Activated CD4-positive, alpha-beta memory T cell treated with anti-CD3 and anti-CD28 coated beads, Interleukin-2, amount 10 ng/mL, durations not matched to agents 7 days and 5 days (primary cell): ENCODE measurements at regions of chr10 and their contacts with region 1.

Region 1: DNA sequence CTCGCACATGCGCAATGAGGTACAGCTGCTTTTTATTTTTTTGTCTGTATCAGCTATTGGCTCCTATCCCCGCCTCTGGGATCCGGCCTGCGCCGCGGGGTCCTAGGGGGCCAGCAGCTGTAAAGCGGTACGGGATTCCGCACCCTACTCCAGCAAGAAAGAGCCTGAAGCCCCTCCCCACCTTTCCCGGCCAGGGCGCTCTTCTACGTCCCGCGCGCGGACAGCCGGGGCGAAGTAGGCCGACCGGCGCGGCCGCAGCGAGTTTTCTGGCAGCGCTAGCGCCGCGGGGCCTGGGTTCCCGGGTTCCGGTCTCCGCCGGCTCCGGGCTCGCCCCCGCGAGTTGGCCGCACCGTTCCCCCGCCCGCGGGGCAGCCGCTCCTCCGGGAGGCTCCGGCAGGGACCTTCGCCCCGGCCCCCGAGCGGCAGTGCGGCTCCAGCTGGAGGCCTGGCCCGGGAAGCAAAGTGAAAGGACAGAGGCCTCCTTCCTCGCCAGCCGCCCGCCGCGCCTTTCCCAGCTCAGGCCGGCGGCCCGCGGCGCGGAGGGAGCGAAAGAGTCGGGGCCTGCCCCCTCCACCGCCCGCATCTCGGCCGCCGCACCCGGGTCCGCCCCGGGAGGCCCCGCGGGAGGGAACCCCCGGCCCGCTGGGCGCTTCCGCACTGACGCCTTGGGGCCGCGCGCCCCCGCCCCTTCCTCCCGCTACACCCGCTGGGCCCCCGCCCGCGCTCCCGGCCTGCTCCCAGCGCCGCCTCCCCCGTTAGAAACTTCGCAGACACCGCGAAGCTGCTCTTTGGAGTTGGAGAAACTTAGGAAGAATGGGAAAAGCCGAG is 4.7 kb upstream of the SPAG6 start:
- DNase-seq: peak; percentile 72
- H3K4me3 Mint-ChIP-seq: peak overlapping the region; percentile 85
- H3K27ac Mint-ChIP-seq: peak overlapping the region; percentile 95
- H3K4me1 Mint-ChIP-seq: peaks cover 56% of the 10 kb centered on the region
- H3K27me3 Mint-ChIP-seq: peaks cover 69% of the 10 kb centered on the region

Region 2: DNA sequence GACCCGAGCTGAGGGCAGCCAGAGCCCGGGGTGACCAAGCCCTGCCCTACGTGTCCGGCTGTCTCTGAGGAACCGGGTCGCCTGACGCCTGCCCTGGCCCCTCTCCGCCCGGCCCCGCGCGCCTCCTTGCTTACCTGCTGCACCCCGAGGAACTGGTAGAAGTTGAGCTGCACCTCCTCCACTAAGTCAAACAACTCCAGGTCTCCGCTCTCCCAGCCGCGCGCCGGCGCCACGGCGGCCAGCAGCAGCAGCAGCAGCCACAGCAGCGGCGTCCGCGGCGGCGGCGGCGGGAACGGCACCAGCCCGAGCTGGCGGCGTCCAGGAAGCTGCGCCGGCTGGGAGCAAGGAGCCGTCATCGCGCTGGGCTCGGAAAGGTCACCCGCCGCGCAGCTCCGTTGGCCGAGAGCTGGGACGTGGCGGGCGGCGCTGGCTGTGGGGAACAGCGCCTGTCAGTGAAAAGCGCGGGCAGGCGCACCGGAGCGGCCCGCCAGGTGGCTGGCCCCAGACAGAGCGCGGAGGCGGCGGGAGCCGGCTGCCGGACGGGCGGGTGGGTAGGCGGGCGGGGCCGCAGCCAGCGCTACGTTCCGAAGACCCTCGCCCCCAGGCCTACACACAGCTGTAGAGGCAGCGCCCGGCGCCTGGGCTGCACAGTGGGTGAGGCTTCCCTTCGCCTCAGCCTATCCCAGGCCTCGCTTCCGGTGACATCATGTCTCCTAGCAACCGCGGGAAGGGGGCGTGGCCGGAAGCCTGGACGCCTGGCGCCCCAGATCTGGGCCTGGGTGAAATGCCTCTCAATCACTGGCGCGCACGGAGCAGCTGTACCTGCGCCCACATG is 337.3 kb before region 1 on chr10 and contains the start of gene DNAJC1:
- CTCF ChIA-PET with region 1: interaction called, 6 read pairs
- POLR2A ChIA-PET with region 1: interaction called, 24 read pairs
- DNase-seq: peak; percentile 98
- H3K4me3 Mint-ChIP-seq: peak within 1 kb of the TSS; percentile 96
- H3K27ac Mint-ChIP-seq: peak within 1 kb of the TSS; percentile 93
- H3K4me1 Mint-ChIP-seq: peaks cover 30% of the 10 kb centered on the region
- H3K27me3 Mint-ChIP-seq: peaks cover 9% of the 10 kb centered on the region
- total RNA-seq, gene DNAJC1: 35.7 to 38.9 TPM

Region 3: DNA sequence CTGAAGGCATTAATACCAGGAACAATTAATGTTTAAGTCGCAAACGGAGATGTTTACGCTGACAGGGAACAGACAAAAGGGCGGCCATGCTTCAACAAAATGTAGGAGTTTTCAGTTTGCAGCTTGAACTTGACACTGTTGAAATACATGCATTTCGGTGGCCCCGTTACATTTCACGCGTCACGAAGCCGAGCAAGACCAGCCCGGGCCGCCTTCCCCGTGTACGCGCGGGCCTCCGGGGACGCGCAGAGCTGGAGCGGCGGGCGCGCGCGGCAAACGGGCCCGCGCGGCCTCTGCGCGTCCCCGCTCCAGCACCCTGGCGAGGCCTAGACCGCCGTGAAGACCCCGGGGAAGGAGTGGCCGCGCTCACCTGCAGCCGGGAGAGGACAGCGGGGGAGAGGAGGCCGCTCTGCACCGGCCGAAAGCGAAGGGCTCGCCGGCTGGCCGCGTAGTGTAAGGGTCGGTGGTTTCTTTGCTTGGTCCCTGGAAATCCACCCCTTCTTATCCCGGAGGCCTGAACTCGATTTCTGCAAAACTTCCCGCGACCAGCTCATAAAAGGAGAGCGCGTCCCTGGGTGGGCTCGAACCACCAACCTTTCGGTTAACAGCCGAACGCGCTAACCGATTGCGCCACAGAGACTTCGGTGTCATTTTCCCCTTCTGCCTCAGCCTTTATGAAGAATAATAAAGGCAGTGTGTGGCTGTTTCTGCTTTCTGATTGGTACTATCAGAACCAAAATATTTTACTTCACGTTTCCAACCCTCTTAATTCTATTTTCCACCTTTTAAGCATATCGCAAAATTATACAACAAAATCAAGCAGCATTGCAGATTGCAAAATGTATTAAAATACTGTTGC is 111.4 kb before region 1 on chr10:
- CTCF ChIA-PET with region 1: interaction called, 4 read pairs
- POLR2A ChIA-PET with region 1: interaction called, 23 read pairs
- DNase-seq: peak; percentile 83
- H3K4me3 Mint-ChIP-seq: peak overlapping the region; percentile 76
- H3K27ac Mint-ChIP-seq: peak overlapping the region; percentile 95
- H3K4me1 Mint-ChIP-seq: peaks cover 27% of the 10 kb centered on the region
- H3K27me3 Mint-ChIP-seq: peaks cover 20% of the 10 kb centered on the region

Region 4: GRCh38 chr10:22251751-22252223 is 88.8 kb before region 1 on chr10:
- CTCF ChIA-PET with region 1: no interaction called
- POLR2A ChIA-PET with region 1: interaction called, 16 read pairs
- DNase-seq: peak; percentile 78
- H3K4me3 Mint-ChIP-seq: peak overlapping the region; percentile 88
- H3K27ac Mint-ChIP-seq: peak overlapping the region; percentile 97
- H3K4me1 Mint-ChIP-seq: peaks cover 44% of the 10 kb centered on the region
- H3K27me3 Mint-ChIP-seq: peaks cover 5% of the 10 kb centered on the region

Region 5: GRCh38 chr10:22325272-22326144 is 15.1 kb before region 1 on chr10:
- CTCF ChIA-PET with region 1: interaction called, 13 read pairs
- POLR2A ChIA-PET with region 1: no interaction called
- DNase-seq: peak; percentile 77
- H3K4me3 Mint-ChIP-seq: peak overlapping the region; percentile 82
- H3K27ac Mint-ChIP-seq: peak overlapping the region; percentile 67
- H3K4me1 Mint-ChIP-seq: peaks cover 46% of the 10 kb centered on the region
- H3K27me3 Mint-ChIP-seq: peaks cover 32% of the 10 kb centered on the region